ENCODE measurements at regions of chr9 and their contacts with region 1.

Region 1: DNA sequence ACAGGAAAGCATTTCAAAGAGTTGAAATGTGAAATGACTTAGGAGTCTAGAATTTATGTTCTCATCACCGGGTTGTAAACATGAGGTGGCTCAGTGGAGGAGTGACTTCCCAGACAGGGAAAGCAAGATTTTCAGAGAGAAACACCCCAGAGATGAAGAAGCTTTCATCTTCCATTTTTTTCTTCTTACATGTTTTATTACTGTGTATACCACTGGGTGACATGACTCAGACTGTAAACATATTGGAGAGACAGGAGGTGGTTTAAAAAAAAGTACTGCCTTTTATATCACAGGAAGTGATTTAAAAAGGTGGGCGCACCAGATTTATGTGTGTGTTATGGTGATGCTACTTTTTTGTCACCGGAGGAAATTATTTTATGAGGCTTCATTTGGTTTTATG is 209.1 kb upstream of the TUT7 start:
- DNase-seq: no peak
- H3K4me3 ChIP-seq: no peak overlapping the region
- H3K27ac ChIP-seq: peak overlapping the region in 1 of 2 donors; percentile 32
- H3K4me1 ChIP-seq: no peaks in the 10 kb centered on the region
- H3K27me3 ChIP-seq: no peaks in the 10 kb centered on the region
- CTCF ChIP-seq: no peak
- POLR2A ChIP-seq: no peak

Region 2: GRCh38 chr9:86072394-86072877 is 490.9 kb before region 1 on chr9:
- intact Hi-C with region 1: no loop called
- DNase-seq: no peak
- H3K4me3 ChIP-seq: no peak overlapping the region
- H3K27ac ChIP-seq: no peak overlapping the region
- H3K4me1 ChIP-seq: no peaks in the 10 kb centered on the region
- H3K27me3 ChIP-seq: no peaks in the 10 kb centered on the region
- CTCF ChIP-seq: no peak
- POLR2A ChIP-seq: no peak

Region 3: GRCh38 chr9:86575825-86576525 is 12.6 kb after region 1 on chr9:
- intact Hi-C with region 1: loop called (anchors 1 kb)
- DNase-seq: no peak
- H3K4me3 ChIP-seq: peak overlapping the region in 1 of 3 donors; percentile 26
- H3K27ac ChIP-seq: peak overlapping the region; percentile 48 to 80
- H3K4me1 ChIP-seq: no peaks in the 10 kb centered on the region
- H3K27me3 ChIP-seq: no peaks in the 10 kb centered on the region
- CTCF ChIP-seq: no peak
- POLR2A ChIP-seq: no peak

Measured in breast epithelium (tissue), 4 donors.